H1 (cell line): ENCODE measurements at regions of chr6 and their contacts with region 1.

Region 1: GRCh38 chr6:43774776-43775534 is 4.9 kb downstream of the VEGFA start:
- DNase-seq: peak in 1 of 2 experiments; percentile 85
- H3K4me3 ChIP-seq: peak overlapping the region in 2 of 4 experiments; percentile 12 to 87; a peak in 4 of 8 replicates
- H3K27ac ChIP-seq: peak overlapping the region; percentile 37; the same call in 1 of the 2 replicates
- H3K4me1 ChIP-seq: peaks cover 0 to 24% (median 18%) of the 10 kb centered on the region in 4 experiments; a peak in 6 of 7 replicates
- H3K27me3 ChIP-seq: no peaks in the 10 kb centered on the region
- CTCF ChIP-seq: peak in 2 of 3 experiments; percentile 84 to 86; a peak in 3 of 4 replicates
- EP300 ChIP-seq: no peak
- POLR2A ChIP-seq: no peak
- RAD21 ChIP-seq: peak; percentile 65 to 69

Region 2: GRCh38 chr6:43541774-43542471 is 233.0 kb before region 1 on chr6:
- CTCF ChIA-PET with region 1: no interaction called
- POLR2A ChIA-PET with region 1: no interaction called
- DNase-seq: no peak
- H3K4me3 ChIP-seq: no peak overlapping the region
- H3K27ac ChIP-seq: no peak overlapping the region
- H3K4me1 ChIP-seq: no peaks in the 10 kb centered on the region
- H3K27me3 ChIP-seq: no peaks in the 10 kb centered on the region; a peak in 1 of 7 replicates
- CTCF ChIP-seq: no peak
- EP300 ChIP-seq: no peak
- POLR2A ChIP-seq: no peak
- RAD21 ChIP-seq: no peak

Region 3: DNA sequence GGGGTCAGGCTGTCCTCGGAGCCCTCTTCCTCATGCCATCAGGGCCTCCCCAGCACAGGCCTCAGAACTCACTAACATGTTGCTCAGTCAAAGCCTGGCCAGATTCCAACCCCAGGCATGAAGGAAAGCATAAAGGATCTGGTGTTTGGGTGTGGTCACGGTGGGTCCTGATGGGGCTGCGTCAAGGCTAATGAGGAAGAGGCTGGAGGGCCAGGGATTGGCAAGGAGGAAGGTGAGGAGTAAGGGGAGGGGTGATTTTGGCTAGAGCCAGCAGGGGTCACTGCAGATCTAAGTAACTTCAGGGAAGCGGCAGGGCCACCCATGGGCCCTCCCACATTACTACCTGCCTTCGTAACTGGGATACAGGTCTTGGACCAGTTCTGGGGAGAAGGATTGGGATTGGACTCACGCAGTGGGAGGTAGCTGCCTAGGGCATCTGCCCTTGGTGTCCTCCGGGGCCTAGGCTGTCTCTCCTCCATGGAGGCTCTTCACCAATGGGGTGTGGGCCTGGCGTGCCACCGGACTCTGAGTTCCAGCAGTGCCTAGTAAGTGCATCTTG is 51.1 kb before region 1 on chr6:
- CTCF ChIA-PET with region 1: interaction called, 61 read pairs
- POLR2A ChIA-PET with region 1: interaction called, 18 read pairs
- DNase-seq: peak; percentile 49 to 85
- H3K4me3 ChIP-seq: no peak overlapping the region
- H3K27ac ChIP-seq: no peak overlapping the region
- H3K4me1 ChIP-seq: peaks cover 0 to 8% (median 0%) of the 10 kb centered on the region in 4 experiments; a peak in 4 of 7 replicates
- H3K27me3 ChIP-seq: no peaks in the 10 kb centered on the region
- CTCF ChIP-seq: peak; percentile 77 to 82 (median 81)
- EP300 ChIP-seq: no peak
- POLR2A ChIP-seq: no peak
- RAD21 ChIP-seq: peak; percentile 89

Region 4: GRCh38 chr6:43758617-43759050 is 16.3 kb before region 1 on chr6:
- CTCF ChIA-PET with region 1: interaction called, 78 read pairs
- POLR2A ChIA-PET with region 1: interaction called, 22 read pairs
- DNase-seq: peak in 1 of 2 experiments; percentile 91
- H3K4me3 ChIP-seq: no peak overlapping the region
- H3K27ac ChIP-seq: no peak overlapping the region
- H3K4me1 ChIP-seq: peaks cover 0 to 9% (median 5%) of the 10 kb centered on the region in 4 experiments; a peak in 5 of 7 replicates
- H3K27me3 ChIP-seq: no peaks in the 10 kb centered on the region
- CTCF ChIP-seq: peak; percentile 87 to 95 (median 94)
- EP300 ChIP-seq: no peak
- POLR2A ChIP-seq: no peak
- RAD21 ChIP-seq: peak; percentile 81 to 88

Region 5: GRCh38 chr6:43803783-43804549 is 29.0 kb after region 1 on chr6:
- CTCF ChIA-PET with region 1: interaction called, 11 read pairs
- POLR2A ChIA-PET with region 1: interaction called, 3 read pairs
- DNase-seq: no peak
- H3K4me3 ChIP-seq: no peak overlapping the region
- H3K27ac ChIP-seq: no peak overlapping the region
- H3K4me1 ChIP-seq: no peaks in the 10 kb centered on the region; a peak in 1 of 7 replicates
- H3K27me3 ChIP-seq: no peaks in the 10 kb centered on the region; a peak in 1 of 7 replicates
- CTCF ChIP-seq: no peak
- EP300 ChIP-seq: no peak
- POLR2A ChIP-seq: no peak
- RAD21 ChIP-seq: no peak

Region 6: DNA sequence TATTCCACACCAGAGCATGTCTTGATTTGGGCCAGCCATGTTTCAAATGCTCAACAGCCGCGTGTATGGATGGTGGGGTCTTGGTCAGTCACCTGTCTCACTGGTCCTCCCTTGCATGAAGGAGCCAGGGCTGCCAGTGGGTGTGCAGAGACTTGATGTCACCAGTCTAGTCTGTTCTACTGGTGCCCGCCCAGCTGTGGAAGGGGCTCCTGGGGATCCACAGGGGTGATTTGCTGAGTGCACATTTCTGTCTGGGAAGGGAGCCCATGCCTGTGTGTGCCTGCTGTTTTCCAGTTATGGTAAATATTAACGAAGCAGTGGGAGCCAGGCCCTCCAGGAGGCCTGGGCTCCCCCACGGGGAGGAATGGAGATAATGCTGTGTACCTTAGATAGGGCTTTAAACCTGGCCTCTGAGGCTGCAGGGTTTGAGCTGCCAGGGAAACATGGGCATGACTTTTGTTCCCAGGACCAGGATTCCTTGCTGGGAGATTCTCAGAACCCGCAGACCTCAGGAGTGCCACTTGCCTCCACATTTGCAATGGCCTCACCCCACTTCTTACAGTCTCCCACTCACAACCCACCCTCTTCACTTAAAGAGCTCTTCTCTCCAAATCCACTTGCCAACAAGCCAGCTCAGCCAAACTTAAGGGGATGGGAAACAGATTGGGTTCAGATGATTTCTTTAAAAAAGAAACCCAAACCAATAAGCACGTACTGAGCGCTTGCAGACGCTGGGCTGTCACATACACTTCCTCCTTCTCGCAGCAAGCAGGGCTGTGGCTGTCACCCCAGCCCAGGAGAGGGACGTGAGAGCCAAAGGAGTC is 49.1 kb after region 1 on chr6:
- CTCF ChIA-PET with region 1: interaction called, 10 read pairs
- POLR2A ChIA-PET with region 1: interaction called, 3 read pairs
- DNase-seq: no peak
- H3K4me3 ChIP-seq: no peak overlapping the region
- H3K27ac ChIP-seq: no peak overlapping the region
- H3K4me1 ChIP-seq: peaks cover 0 to 4% (median 0%) of the 10 kb centered on the region in 4 experiments; a peak in 2 of 7 replicates
- H3K27me3 ChIP-seq: no peaks in the 10 kb centered on the region; a peak in 2 of 7 replicates
- CTCF ChIP-seq: no peak
- EP300 ChIP-seq: no peak
- POLR2A ChIP-seq: no peak
- RAD21 ChIP-seq: no peak

Region 7: DNA sequence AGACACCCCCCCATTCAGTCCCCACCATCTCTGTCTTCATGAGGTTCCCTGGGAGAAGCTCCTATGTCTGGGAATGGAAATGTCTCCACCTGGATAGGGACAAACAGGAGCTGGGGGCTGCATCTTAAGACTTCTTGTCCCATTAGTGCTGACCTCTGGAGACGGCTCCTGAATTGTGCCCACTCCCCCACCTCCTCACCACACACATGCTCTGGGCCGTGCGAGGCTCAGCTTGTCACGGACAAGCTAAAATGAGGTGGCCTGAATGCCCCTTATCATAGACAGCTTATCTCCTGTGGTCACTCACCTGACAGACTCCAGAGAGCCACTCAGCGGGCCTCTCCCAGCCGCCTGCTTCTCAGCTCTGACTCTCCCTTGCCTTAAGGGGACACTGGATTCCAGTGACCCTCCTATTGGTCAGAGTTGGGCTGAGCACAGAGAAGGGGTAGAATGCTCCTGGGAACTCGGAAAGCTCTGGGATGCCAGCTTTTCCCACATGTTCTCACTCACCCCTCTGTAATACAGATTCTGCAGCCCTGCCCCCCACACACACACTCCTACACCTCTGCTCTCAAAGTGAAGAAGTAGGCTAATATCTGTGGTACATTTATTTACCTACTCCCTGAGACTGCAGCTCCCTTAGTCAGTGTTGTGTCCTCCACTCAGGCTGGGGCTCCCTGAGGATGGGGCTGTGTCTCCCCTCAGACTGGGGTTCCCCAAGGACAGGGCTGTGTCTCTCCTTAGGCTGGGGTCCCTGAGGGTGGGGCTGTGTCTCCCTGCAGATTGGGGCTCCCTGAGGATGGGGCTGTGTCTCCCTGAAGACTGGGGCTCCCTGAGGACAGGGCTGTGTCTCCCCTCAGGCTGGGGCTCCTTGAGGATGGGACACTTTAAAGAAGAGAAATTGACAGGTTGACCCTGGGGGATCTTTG is 162.5 kb after region 1 on chr6:
- CTCF ChIA-PET with region 1: interaction called, 11 read pairs
- POLR2A ChIA-PET with region 1: interaction called, 3 read pairs
- DNase-seq: no peak
- H3K4me3 ChIP-seq: no peak overlapping the region
- H3K27ac ChIP-seq: no peak overlapping the region
- H3K4me1 ChIP-seq: peaks cover 0 to 16% (median under 1%) of the 10 kb centered on the region in 4 experiments; a peak in 4 of 7 replicates
- H3K27me3 ChIP-seq: no peaks in the 10 kb centered on the region; a peak in 1 of 7 replicates
- CTCF ChIP-seq: no peak
- EP300 ChIP-seq: no peak
- POLR2A ChIP-seq: no peak
- RAD21 ChIP-seq: no peak

Region 8: GRCh38 chr6:44074439-44075136 is 299.6 kb after region 1 on chr6:
- CTCF ChIA-PET with region 1: interaction called, 41 read pairs
- POLR2A ChIA-PET with region 1: interaction called, 13 read pairs
- DNase-seq: peak in 1 of 2 experiments; percentile 81
- H3K4me3 ChIP-seq: peak overlapping the region in 1 of 4 experiments; percentile 56; a peak in 1 of 8 replicates
- H3K27ac ChIP-seq: no peak overlapping the region
- H3K4me1 ChIP-seq: peaks cover 9 to 32% (median 26%) of the 10 kb centered on the region in 4 experiments
- H3K27me3 ChIP-seq: peaks cover 0 to 9% (median 2%) of the 10 kb centered on the region in 4 experiments; a peak in 4 of 7 replicates
- CTCF ChIP-seq: peak in 2 of 3 experiments; percentile 88 to 91; a peak in 3 of 4 replicates
- EP300 ChIP-seq: no peak
- POLR2A ChIP-seq: no peak
- RAD21 ChIP-seq: peak; percentile 67 to 77

Region 9: DNA sequence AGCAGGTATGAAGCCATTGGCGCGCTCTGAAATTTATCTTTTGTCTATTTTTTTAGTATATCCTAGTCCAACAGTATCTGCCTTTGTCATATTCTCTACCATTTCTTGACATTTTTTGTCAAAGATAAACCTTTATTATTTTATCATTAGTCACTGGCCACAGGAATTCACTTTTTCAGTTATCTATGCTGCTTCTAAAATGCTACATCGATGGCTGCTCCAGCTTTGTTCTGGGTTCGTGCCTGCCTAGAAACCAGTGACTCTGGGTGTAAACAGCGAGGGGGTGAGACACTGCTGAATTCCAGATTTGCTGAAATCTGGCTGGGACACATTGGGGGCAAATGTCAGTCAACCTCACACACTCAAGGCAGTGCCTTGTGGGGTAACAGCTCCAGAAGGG is 805.9 kb after region 1 on chr6:
- CTCF ChIA-PET with region 1: no interaction called
- POLR2A ChIA-PET with region 1: no interaction called
- DNase-seq: no peak
- H3K4me3 ChIP-seq: no peak overlapping the region
- H3K27ac ChIP-seq: no peak overlapping the region
- H3K4me1 ChIP-seq: no peaks in the 10 kb centered on the region
- H3K27me3 ChIP-seq: no peaks in the 10 kb centered on the region
- CTCF ChIP-seq: no peak
- EP300 ChIP-seq: no peak
- POLR2A ChIP-seq: no peak
- RAD21 ChIP-seq: no peak